Common myeloid progenitor, CD34-positive (primary cell): ENCODE measurements at regions of chr7 and their contacts with region 1.

Region 1: DNA sequence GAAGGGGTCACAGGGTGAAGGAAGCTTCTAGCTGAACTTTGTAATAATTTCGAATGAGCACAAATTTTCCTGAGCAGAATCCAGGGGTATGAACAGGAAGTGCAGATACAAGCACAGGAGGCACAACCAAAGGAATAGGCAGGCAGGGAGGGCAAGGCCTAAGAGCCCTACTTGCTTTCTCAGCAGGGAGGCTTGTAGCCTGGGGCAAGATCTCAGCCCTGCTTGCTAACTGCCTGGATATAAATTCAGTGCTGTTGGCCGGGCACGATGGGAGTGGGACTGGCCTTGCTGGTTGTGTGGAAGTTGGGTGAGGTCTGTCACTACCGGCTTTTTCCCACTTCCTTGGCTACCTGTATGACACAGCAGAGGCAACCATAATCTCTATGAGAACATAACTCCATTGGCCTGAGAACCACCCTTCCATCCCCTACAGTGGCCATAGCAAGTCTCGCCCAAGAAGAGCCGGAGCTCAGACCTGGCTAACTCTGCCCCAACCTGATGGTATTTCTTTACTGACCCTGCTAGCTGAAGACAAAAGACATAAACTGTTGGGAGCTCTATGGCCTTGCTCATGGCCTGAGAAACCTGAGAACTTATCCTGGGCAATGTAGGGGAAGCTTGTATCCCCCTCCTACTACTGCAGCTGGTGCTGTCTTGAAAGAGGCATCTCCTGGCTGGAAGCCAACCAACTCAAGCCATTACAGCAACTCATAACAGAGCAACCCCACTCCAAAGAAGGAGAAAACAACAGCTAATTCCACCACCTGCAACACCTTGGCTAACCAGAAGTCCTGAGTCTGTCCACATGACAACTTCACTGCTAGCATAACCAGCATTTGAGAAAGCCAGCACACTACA is 27.6 kb downstream of the CLDN12 start:
- DNase-seq: no peak
- H3K4me3 ChIP-seq: no peak overlapping the region
- H3K27ac ChIP-seq: no peak overlapping the region
- H3K4me1 ChIP-seq: no peaks in the 10 kb centered on the region
- H3K27me3 ChIP-seq: no peaks in the 10 kb centered on the region

Region 2: GRCh38 chr7:90312745-90313144 is 118.1 kb before region 1 on chr7:
- CTCF ChIA-PET with region 1: interaction called, 50 read pairs
- POLR2A ChIA-PET with region 1: no interaction called
- DNase-seq: peak in 2 of 3 donors; percentile 41 to 46
- H3K4me3 ChIP-seq: no peak overlapping the region
- H3K27ac ChIP-seq: no peak overlapping the region
- H3K4me1 ChIP-seq: no peaks in the 10 kb centered on the region
- H3K27me3 ChIP-seq: peaks cover 2 to 11% (median 7%) of the 10 kb centered on the region in 5 experiments